GM12878 (cell line): ENCODE measurements at regions of chr12 and their contacts with region 1.

Region 1: DNA sequence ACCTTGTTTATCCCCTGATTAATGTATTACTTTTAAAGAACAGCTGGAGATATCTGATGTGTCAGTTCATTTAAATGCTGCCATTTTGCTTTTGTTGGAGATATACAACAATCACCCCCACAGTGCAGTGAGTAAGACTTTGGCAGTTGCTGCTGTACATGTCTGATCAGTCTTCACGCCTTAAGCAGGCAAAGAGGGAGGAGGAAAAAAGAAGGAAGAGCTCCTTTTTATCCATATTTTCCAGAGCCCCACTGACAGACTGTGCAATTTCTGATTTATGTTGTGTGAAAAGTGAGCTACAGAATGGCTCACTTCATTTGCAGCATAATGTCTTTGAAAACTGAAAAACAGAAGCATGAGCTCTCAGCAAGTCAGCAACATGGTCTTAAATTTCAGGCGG is 319.7 kb upstream of the LRIG3 start:
- DNase-seq: no peak
- ATAC-seq: no peak
- H3K4me3 ChIP-seq: no peak overlapping the region
- H3K27ac ChIP-seq: no peak overlapping the region
- H3K4me1 ChIP-seq: no peaks in the 10 kb centered on the region
- H3K27me3 ChIP-seq: no peaks in the 10 kb centered on the region
- CTCF ChIP-seq: no peak
- EP300 ChIP-seq: no peak
- POLR2A ChIP-seq: no peak
- RAD21 ChIP-seq: no peak

Region 2: DNA sequence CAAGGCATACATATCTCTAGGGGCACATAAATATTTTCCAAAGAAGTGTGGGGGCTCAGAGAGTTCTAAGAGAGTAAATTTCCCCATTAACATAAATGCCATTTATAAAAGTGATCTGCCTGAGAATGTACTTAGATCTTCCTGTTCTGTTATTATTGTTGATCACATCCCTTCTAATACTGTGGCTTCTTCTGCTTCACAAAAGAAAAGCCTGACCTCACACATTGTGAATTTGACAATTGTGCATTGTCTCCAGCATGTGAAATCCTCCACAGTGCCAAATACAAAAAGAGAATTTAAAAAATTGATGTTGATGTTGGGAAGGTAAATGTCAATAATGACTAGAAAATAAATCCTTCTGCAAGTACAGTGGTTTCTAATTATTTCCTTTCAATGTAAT is 10.7 kb after region 1 on chr12:
- CTCF ChIA-PET with region 1: no interaction called
- POLR2A ChIA-PET with region 1: no interaction called
- RAD21 ChIA-PET with region 1: no interaction called
- SMC1A ChIA-PET with region 1: no interaction called
- in situ Hi-C with region 1: no loop called
- intact Hi-C with region 1: loop called (anchors 1 kb)
- DNase-seq: no peak
- ATAC-seq: no peak
- H3K4me3 ChIP-seq: no peak overlapping the region
- H3K27ac ChIP-seq: no peak overlapping the region
- H3K4me1 ChIP-seq: no peaks in the 10 kb centered on the region
- H3K27me3 ChIP-seq: no peaks in the 10 kb centered on the region
- CTCF ChIP-seq: no peak
- EP300 ChIP-seq: no peak
- POLR2A ChIP-seq: no peak
- RAD21 ChIP-seq: no peak